ENCODE measurements at regions of chr17 and their contacts with region 1.

Region 1: DNA sequence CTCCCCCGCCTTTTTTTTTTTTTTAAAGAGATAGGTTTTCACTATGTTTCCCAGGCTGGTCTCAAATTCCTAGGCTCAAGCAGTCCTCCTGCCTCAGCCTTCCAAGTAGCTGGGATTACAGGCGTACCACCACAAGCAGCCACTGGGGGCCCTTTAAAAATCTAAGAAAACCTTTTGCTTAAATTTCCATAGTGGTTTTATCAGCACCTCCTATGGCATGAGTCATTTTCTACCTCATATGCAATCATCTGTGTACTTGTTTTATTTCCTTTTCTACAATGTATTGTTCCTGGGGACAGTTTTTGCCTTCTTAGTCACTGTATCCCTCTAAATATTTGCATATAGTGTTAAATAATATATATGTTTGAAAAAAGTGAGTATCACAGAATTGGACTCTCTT is 29.2 kb downstream of the GNA13 start:
- DNase-seq: peak; percentile 79
- ATAC-seq: peak; percentile 68
- H3K4me3 Mint-ChIP-seq: peak overlapping the region; percentile 56
- H3K27ac Mint-ChIP-seq: peak overlapping the region; percentile 96
- H3K4me1 Mint-ChIP-seq: peaks cover 81% of the 10 kb centered on the region
- H3K27me3 Mint-ChIP-seq: no peaks in the 10 kb centered on the region
- CTCF ChIP-seq: peak; percentile 84

Region 2: DNA sequence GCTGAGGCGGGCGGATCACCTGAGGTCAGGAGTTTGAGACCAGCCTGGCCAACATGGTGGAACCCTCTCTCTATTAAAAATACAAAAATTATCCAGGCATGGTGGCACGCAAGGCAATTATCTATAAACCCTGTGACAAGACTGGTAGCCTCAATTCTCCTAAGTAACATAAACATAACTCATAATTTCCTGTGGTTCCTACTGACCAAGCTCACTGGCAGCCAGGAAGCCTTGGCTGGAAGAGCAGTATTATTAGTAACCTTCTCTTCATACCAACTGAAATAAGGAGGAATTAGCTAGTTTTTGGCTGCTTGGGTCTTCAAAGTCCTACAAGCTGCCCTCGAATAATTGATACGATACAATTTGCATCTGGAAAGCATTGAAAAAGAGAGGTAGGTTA is 76.4 kb before region 1 on chr17:
- CTCF ChIA-PET with region 1: no interaction called
- POLR2A ChIA-PET with region 1: no interaction called
- intact Hi-C with region 1: no loop called
- DNase-seq: no peak
- ATAC-seq: no peak
- H3K4me3 Mint-ChIP-seq: no peak overlapping the region
- H3K27ac Mint-ChIP-seq: no peak overlapping the region
- H3K4me1 Mint-ChIP-seq: peaks cover 3% of the 10 kb centered on the region
- H3K27me3 Mint-ChIP-seq: no peaks in the 10 kb centered on the region
- CTCF ChIP-seq: no peak

Region 3: DNA sequence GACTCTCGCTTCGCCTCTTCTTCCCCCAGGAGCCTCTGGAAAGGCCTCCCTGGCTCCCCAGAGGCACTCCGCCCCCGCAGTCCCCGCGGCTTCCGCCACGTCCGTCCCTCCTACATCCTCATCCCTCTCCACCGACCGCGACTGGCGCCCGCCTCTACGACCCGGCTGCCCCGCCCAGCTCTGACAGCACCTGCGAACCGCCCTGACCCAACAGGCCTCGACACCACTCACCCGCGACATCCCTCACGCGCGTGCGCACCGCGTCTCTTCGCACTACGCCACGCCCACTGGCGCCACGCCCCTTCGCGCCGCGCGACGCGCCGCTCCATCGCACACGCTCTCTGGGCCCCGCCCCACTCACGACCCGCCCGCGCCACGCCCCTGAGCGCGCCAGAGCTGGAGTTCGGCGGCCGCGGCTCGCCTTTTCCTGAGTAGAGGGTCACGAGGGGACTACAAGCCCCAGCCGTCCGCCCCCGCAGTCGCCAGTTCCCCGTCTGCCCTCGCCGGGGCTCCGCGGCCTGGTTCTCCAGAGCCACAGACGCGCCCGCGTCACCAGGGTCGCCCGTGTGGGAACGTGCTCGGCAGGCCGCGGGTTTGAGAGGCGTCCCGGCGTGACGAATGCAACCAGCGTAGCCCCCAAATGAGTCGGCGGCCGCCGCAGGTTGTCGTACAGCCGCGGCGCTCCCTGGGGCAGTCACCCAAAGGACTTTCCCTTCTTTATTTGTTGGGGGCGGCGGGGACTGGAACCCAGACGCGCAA is 51.8 kb before region 1 on chr17:
- CTCF ChIA-PET with region 1: interaction called, 4 read pairs
- POLR2A ChIA-PET with region 1: interaction called, 10 read pairs
- intact Hi-C with region 1: no loop called
- DNase-seq: peak; percentile 97
- ATAC-seq: peak; percentile 78
- H3K4me3 Mint-ChIP-seq: peak overlapping the region; percentile 88
- H3K27ac Mint-ChIP-seq: peak overlapping the region; percentile 99
- H3K4me1 Mint-ChIP-seq: peaks cover 50% of the 10 kb centered on the region
- H3K27me3 Mint-ChIP-seq: no peaks in the 10 kb centered on the region
- CTCF ChIP-seq: no peak

Region 4: GRCh38 chr17:64984851-64985521 is 42.3 kb before region 1 on chr17:
- CTCF ChIA-PET with region 1: interaction called, 3 read pairs
- POLR2A ChIA-PET with region 1: interaction called, 4 read pairs
- intact Hi-C with region 1: loop called (anchors 5 kb)
- DNase-seq: peak; percentile 72
- ATAC-seq: peak; percentile 45
- H3K4me3 Mint-ChIP-seq: peak overlapping the region; percentile 77
- H3K27ac Mint-ChIP-seq: peak overlapping the region; percentile 99
- H3K4me1 Mint-ChIP-seq: peaks cover 43% of the 10 kb centered on the region
- H3K27me3 Mint-ChIP-seq: no peaks in the 10 kb centered on the region
- CTCF ChIP-seq: no peak

Region 5: DNA sequence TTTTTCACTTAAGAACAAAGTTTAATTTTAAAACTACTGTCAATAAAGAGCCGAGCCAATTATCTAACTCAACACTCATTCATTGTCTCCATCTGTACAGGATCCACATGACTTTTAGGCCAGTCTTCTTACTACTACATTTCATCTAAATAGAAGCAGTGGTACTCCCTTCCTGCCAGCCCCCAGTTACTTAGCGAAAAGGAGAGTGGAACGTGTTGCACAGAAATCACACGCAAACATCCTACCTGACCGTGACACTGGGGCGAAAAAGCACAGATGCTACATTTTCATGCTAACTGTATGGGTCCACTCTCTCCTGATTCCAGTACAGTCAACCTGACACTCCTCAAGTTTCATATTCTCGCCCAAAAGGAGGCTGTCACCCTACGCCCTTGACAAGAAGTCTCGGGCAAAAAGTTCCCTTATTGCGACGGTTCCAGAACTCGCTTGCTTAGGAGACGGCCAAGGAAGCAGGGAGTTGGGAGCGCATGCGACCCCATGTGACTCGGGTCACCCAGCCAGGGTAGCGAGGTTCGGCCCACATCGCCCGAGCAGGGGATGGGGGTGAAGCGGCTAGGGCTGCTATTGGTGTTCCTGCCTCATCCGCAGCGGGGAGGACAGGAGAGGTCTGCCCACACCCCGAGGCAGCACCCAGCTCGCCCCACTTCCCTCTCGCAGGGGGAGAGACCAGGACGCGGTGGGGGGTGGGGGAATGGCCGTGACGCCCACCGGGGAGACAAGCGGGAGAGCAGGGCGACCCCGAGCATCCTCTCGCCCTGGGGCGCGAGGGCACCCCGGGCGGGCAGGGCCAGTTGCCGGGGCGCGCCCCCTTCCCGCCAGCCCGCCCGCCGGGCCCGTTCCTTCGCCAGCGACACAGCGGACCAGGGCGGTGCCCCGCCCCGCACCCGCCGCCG is 28.3 kb after region 1 on chr17:
- CTCF ChIA-PET with region 1: interaction called, 5 read pairs
- POLR2A ChIA-PET with region 1: interaction called, 4 read pairs
- intact Hi-C with region 1: loop called (anchors 5 kb)
- DNase-seq: peak; percentile 64
- ATAC-seq: peak; percentile 37
- H3K4me3 Mint-ChIP-seq: peak overlapping the region; percentile 94
- H3K27ac Mint-ChIP-seq: peak overlapping the region; percentile 91
- H3K4me1 Mint-ChIP-seq: peaks cover 37% of the 10 kb centered on the region
- H3K27me3 Mint-ChIP-seq: no peaks in the 10 kb centered on the region
- CTCF ChIP-seq: no peak